Gastrocnemius medialis (tissue), 4 donors: ENCODE measurements at regions of chr2 and their contacts with region 1.

Region 1: DNA sequence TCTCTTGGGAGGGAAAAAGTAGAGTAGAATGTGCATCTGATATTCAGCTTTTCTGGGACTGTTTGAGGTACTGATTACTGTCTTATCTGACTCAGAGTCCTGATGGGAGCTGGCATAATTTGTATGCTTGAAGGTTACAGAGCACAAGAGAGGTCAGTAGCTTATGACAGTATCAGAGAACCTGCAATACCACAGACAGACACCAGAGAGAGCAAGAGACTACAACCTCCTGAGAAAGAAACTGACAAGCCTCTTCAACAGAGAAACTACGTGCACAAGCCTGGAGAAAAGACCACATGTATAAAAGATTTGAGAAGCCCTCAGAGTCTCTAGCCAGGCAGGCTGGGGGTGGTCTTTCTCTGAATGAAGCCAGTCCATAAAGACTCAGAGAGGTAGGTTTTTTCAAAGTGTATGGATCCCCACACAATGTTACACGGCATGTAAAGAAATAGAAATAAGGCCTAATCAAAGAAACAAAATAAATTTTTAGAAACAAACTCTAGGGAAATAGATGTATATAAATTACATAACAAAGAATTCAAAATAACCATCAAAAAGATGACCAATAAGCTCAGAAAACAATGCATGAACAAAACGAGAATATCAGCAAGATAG is 568.3 kb downstream of the LRRTM4 start:
- DNase-seq: no peak
- ATAC-seq: no peak
- H3K4me3 ChIP-seq: no peak overlapping the region
- H3K27ac ChIP-seq: no peak overlapping the region
- H3K4me1 ChIP-seq: no peaks in the 10 kb centered on the region
- H3K27me3 ChIP-seq: no peaks in the 10 kb centered on the region
- CTCF ChIP-seq: peak in 3 of 5 experiments; percentile 13 to 45 (median 27)
- POLR2A ChIP-seq: no peak

Region 2: GRCh38 chr2:77521931-77522470 is 568.2 kb after region 1 on chr2 and contains the start of gene LRRTM4:
- in situ Hi-C with region 1: no loop called
- intact Hi-C with region 1: loop called (anchors 10 kb)
- DNase-seq: peak in 1 of 2 donors; percentile 17
- ATAC-seq: peak in 1 of 2 donors; percentile 46
- H3K4me3 ChIP-seq: peak within 1 kb of the TSS in 2 of 4 donors; percentile 5 to 17
- H3K27ac ChIP-seq: peak within 1 kb of the TSS in 1 of 4 donors; percentile 14
- H3K4me1 ChIP-seq: no peaks in the 10 kb centered on the region
- H3K27me3 ChIP-seq: no peaks in the 10 kb centered on the region
- CTCF ChIP-seq: no peak
- POLR2A ChIP-seq: no peak
- total RNA-seq, gene LRRTM4: 0.09 to 1.1 (median 0.61) TPM